ENCODE measurements at regions of chr18 and their contacts with region 1.

Region 1: DNA sequence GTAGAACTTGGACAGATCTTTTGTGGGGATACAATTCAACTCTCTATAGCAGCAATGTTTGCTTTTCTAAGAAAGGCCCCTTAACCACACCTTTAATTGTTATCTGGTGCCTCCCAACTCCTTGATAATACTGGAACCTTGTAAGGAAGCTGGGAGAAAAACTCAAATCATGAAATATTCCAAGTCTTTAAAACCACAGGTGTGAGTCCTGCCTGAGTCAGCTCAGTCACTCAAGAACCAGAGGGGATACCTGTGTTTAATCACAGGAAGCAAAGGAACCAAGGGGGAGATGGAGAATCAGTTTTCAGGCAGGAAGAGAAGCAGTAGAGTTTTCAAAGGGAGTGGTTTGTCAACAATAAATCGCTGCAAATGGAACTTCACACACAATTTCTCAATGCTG is 159.9 kb downstream of the LAMA3 start:
- DNase-seq: peak; percentile 94
- ATAC-seq: peak; percentile 79
- H3K4me3 ChIP-seq: no peak overlapping the region; the same call in 1 of the 2 replicates
- H3K27ac ChIP-seq: peak overlapping the region; percentile 97
- H3K4me1 ChIP-seq: peaks cover 66% of the 10 kb centered on the region
- H3K27me3 ChIP-seq: no peaks in the 10 kb centered on the region
- CTCF ChIP-seq: no peak

Region 2: DNA sequence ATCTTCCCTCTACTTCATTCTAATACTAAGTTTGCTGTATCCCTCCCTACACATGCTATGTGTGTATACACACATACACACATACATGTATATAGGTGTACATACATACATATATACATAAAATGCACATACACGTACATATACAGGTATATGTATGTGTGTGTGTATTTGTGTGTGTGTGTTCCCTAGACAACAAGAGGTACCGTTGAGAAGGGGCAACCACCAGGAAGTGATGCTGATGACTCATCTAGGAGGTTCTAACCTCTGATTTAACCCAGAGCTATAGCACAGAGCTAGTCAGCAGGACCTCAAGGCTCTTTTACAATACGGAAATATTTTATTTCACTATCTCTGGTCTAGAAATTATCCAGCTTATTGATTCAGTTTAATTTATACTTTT is 20.7 kb before region 1 on chr18:
- CTCF ChIA-PET with region 1: no interaction called
- POLR2A ChIA-PET with region 1: interaction called, 3 read pairs
- intact Hi-C with region 1: loop called (anchors 1 kb)
- DNase-seq: peak; percentile 88
- ATAC-seq: peak; percentile 94
- H3K4me3 ChIP-seq: no peak overlapping the region
- H3K27ac ChIP-seq: peak overlapping the region; percentile 79
- H3K4me1 ChIP-seq: peaks cover 25% of the 10 kb centered on the region
- H3K27me3 ChIP-seq: no peaks in the 10 kb centered on the region
- CTCF ChIP-seq: no peak

Region 3: DNA sequence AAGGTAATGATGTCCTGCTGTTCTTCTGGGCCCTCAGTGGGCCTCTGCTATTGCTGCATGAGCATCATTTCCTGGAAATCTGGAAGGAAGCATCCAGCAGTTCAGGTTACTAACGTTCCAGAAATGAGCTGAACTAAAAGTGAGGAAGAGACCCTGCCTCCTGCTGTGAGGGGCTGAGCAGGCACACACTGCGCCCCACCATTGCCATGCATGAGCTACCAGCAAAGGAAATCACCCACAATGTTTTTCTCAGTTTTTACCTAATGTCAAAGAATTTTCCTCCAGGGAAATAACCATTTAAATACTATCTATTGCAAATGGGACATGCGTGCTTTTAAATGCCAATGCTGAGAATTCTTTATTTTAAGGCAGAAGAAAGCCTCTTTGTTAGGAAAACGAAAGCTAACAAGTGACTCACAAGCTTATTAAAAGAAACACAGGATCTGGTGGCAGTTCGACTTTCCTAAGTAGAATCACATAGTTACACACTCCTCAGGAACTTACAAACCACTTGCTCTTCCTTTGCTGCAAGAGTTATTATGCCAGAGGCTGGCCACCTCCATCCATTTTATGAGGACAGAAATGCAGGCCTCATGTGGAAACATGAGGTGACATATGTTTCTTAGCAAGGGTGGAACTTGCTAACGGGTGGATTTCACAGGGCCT is 12.8 kb after region 1 on chr18:
- CTCF ChIA-PET with region 1: no interaction called
- POLR2A ChIA-PET with region 1: interaction called, 4 read pairs
- intact Hi-C with region 1: loop called (anchors 1 kb)
- DNase-seq: peak; percentile 88
- ATAC-seq: peak; percentile 88
- H3K4me3 ChIP-seq: no peak overlapping the region
- H3K27ac ChIP-seq: peak overlapping the region; percentile 99
- H3K4me1 ChIP-seq: peaks cover 53% of the 10 kb centered on the region
- H3K27me3 ChIP-seq: no peaks in the 10 kb centered on the region
- CTCF ChIP-seq: no peak

Region 4: GRCh38 chr18:23871410-23871809 is 22.3 kb after region 1 on chr18:
- CTCF ChIA-PET with region 1: no interaction called
- POLR2A ChIA-PET with region 1: no interaction called
- intact Hi-C with region 1: loop called (anchors 1 kb)
- DNase-seq: peak; percentile 89
- ATAC-seq: peak; percentile 42
- H3K4me3 ChIP-seq: peak overlapping the region; percentile 14; the same call in 1 of the 2 replicates
- H3K27ac ChIP-seq: peak overlapping the region; percentile 99
- H3K4me1 ChIP-seq: peaks cover 24% of the 10 kb centered on the region
- H3K27me3 ChIP-seq: no peaks in the 10 kb centered on the region
- CTCF ChIP-seq: no peak